HepG2 (cell line): ENCODE measurements at regions of chr17 and their contacts with region 1.

Region 1: DNA sequence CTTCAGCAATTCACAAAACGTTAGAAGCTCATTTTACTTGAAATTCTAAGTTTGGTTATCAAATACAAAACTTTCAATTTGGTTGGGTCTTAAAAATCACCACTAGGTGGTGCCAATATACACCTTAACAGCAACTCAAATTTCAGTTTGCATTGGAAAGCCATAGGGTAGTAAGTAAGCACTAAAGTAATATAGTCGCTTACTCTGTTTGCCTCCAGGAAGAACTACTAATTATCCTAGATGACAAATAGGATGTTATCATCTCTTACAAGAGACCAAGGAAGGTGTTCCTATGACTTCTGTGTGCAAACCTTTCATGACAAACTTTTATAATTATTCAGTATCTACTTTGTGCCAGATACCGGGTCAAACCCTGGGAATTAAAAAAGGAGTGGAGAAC is 93.3 kb downstream of the MYO1D start:
- DNase-seq: peak; percentile 47
- ATAC-seq: peak; percentile 28; the same call in 1 of the 3 replicates
- H3K4me3 ChIP-seq: no peak overlapping the region
- H3K27ac ChIP-seq: no peak overlapping the region
- H3K4me1 ChIP-seq: no peaks in the 10 kb centered on the region
- H3K27me3 ChIP-seq: no peaks in the 10 kb centered on the region
- CTCF ChIP-seq: peak; percentile 77
- EP300 ChIP-seq: no peak
- POLR2A ChIP-seq: no peak
- RAD21 ChIP-seq: peak; percentile 80

Region 2: DNA sequence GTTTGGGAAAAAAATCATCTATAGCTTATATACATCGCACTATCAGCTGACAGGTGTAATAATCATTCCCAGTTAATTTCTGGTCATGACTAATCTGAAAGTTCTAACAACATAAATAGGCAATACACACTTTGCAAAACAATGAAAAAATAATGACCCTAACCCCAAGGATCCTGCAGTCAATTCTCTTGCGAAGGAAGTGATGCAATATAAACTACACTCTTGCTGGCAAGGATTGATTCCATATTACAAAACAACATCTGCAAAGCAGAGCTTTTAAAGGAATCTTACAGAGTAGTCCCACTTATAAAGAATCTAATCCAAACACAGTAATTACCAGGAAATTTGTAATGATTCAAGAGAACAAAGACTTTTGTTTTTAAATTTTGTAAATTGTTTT is 19.9 kb after region 1 on chr17:
- CTCF ChIA-PET with region 1: no interaction called
- POLR2A ChIA-PET with region 1: no interaction called
- in situ Hi-C with region 1: no loop called
- intact Hi-C with region 1: no loop called
- DNase-seq: no peak
- ATAC-seq: no peak
- H3K4me3 ChIP-seq: no peak overlapping the region
- H3K27ac ChIP-seq: no peak overlapping the region
- H3K4me1 ChIP-seq: peaks cover 14% of the 10 kb centered on the region
- H3K27me3 ChIP-seq: no peaks in the 10 kb centered on the region
- CTCF ChIP-seq: no peak
- EP300 ChIP-seq: no peak
- POLR2A ChIP-seq: no peak
- RAD21 ChIP-seq: no peak

Region 3: DNA sequence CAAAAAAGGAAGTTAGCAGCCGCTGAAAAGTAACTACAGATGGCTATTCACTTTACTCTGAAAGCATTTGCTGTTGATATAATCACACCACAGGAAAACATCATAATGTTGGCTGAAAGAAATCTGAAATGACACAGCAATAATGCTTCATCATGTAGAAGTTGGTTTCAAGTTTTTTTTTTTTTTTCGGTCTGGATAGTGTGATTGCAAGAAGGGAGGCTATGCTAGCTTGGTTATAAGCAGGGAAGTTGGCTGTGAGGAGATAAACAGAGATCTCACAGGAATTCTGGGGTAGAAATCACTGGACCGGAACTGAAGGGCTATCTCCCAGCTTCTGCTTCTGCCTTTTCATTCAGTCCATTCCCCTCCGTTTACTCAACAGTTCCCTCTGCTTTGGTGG is 35.4 kb after region 1 on chr17:
- CTCF ChIA-PET with region 1: no interaction called
- POLR2A ChIA-PET with region 1: no interaction called
- in situ Hi-C with region 1: no loop called
- intact Hi-C with region 1: no loop called
- DNase-seq: no peak
- ATAC-seq: no peak
- H3K4me3 ChIP-seq: no peak overlapping the region
- H3K27ac ChIP-seq: no peak overlapping the region
- H3K4me1 ChIP-seq: peaks cover 7% of the 10 kb centered on the region
- H3K27me3 ChIP-seq: no peaks in the 10 kb centered on the region
- CTCF ChIP-seq: no peak
- EP300 ChIP-seq: no peak
- POLR2A ChIP-seq: no peak
- RAD21 ChIP-seq: no peak

Region 4: GRCh38 chr17:32877164-32877764 is 93.7 kb after region 1 on chr17:
- CTCF ChIA-PET with region 1: interaction called, 55 read pairs
- POLR2A ChIA-PET with region 1: no interaction called
- in situ Hi-C with region 1: loop called (anchors 5 kb)
- intact Hi-C with region 1: loop called (anchors 1 kb)
- DNase-seq: peak; percentile 70
- ATAC-seq: peak; percentile 93
- H3K4me3 ChIP-seq: peak overlapping the region; percentile 78 to 92 (median 87)
- H3K27ac ChIP-seq: peak overlapping the region; percentile 63
- H3K4me1 ChIP-seq: peaks cover 50% of the 10 kb centered on the region
- H3K27me3 ChIP-seq: no peaks in the 10 kb centered on the region
- CTCF ChIP-seq: peak; percentile 69
- EP300 ChIP-seq: no peak
- POLR2A ChIP-seq: no peak
- RAD21 ChIP-seq: peak; percentile 97

Region 5: DNA sequence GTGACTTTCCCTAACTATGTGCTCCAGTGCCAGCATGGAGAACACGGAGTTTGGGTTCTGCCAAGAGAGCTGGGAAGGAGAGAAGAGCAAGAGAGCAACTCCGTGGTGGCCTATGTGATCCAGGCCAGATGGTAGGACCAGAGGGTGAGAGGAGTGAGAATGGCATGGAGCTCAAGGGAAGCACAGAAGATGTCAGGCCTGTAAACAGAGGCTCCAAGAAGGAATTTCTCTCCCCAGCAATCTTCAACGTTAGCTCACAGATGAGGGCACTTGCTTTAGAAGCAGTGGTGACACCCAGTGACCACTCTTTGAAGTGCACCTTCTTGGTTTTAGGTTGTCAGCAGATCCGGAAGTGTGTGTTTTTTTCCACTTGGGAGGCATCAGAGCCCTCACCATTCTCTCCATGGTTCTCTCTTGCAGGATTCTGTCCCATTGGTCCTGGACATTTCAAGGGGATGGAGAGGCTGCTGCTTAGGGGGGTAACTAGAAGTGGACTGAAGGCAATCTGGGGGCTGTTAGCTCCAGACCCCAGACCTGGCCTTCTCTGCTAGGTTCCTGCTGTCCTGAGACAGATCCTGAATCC is 126.3 kb after region 1 on chr17:
- CTCF ChIA-PET with region 1: interaction called, 24 read pairs
- POLR2A ChIA-PET with region 1: no interaction called
- in situ Hi-C with region 1: loop called (anchors 5 kb)
- intact Hi-C with region 1: loop called (anchors 1 kb)
- DNase-seq: peak; percentile 71
- ATAC-seq: peak; percentile 74
- H3K4me3 ChIP-seq: no peak overlapping the region
- H3K27ac ChIP-seq: no peak overlapping the region
- H3K4me1 ChIP-seq: peaks cover 54% of the 10 kb centered on the region
- H3K27me3 ChIP-seq: no peaks in the 10 kb centered on the region
- CTCF ChIP-seq: peak; percentile 90
- EP300 ChIP-seq: no peak
- POLR2A ChIP-seq: no peak
- RAD21 ChIP-seq: peak; percentile 45; the same call in 1 of the 2 replicates

Region 6: DNA sequence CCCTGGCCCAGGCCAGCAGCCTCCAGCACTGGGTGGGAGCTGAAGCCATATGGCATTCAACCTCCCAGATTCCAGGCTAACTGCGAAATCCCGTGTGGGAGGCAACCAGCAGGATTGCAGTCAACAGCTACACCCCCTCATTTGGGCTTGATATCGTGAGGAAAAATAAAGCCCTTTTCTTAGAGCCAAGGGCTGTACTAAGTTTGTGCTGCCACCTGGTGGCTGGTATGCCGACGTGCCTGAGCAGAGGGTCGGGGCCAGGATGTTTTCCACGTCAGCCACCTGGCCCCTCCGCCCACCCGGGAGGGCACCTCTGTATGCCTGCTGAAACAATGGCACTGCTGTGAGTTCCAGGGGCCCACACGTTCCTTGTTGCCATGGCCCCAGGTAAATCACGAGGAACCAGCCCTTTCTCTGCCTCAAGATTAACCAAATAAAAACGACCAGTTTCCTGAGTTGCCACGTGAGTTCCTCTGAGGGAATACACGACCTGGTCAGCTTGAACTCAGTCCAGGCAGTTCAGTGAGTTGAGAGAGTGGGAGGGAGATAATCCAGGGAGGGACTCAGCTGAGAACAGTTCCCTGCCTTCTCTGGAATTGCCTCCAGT is 153.4 kb after region 1 on chr17:
- CTCF ChIA-PET with region 1: interaction called, 14 read pairs
- POLR2A ChIA-PET with region 1: no interaction called
- in situ Hi-C with region 1: no loop called
- intact Hi-C with region 1: loop called (anchors 1 kb)
- DNase-seq: peak; percentile 59
- ATAC-seq: peak; percentile 94
- H3K4me3 ChIP-seq: no peak overlapping the region
- H3K27ac ChIP-seq: peak overlapping the region; percentile 66
- H3K4me1 ChIP-seq: peaks cover 11% of the 10 kb centered on the region
- H3K27me3 ChIP-seq: no peaks in the 10 kb centered on the region
- CTCF ChIP-seq: peak; percentile 90
- EP300 ChIP-seq: no peak
- POLR2A ChIP-seq: no peak
- RAD21 ChIP-seq: peak; percentile 37; the same call in 1 of the 2 replicates

Region 7: GRCh38 chr17:32997753-32998632 is 214.4 kb after region 1 on chr17:
- CTCF ChIA-PET with region 1: interaction called, 9 read pairs
- POLR2A ChIA-PET with region 1: no interaction called
- in situ Hi-C with region 1: loop called (anchors 5 kb)
- intact Hi-C with region 1: no loop called
- DNase-seq: peak; percentile 35
- ATAC-seq: peak; percentile 90
- H3K4me3 ChIP-seq: no peak overlapping the region
- H3K27ac ChIP-seq: no peak overlapping the region
- H3K4me1 ChIP-seq: no peaks in the 10 kb centered on the region
- H3K27me3 ChIP-seq: peaks cover 2 to 30% of the 10 kb centered on the region in 2 experiments; a peak in 4 of 5 replicates
- CTCF ChIP-seq: peak; percentile 91
- EP300 ChIP-seq: no peak
- POLR2A ChIP-seq: no peak
- RAD21 ChIP-seq: 0 out of 2 replicates have a peak, but pooled peaks have one; percentile 54